ENCODE measurements at regions of chr20 and their contacts with region 1.

Region 1: GRCh38 chr20:33933469-33933909 is 60.2 kb upstream of the RALY start:
- DNase-seq: peak; percentile 69
- ATAC-seq: peak; percentile 97

Region 2: DNA sequence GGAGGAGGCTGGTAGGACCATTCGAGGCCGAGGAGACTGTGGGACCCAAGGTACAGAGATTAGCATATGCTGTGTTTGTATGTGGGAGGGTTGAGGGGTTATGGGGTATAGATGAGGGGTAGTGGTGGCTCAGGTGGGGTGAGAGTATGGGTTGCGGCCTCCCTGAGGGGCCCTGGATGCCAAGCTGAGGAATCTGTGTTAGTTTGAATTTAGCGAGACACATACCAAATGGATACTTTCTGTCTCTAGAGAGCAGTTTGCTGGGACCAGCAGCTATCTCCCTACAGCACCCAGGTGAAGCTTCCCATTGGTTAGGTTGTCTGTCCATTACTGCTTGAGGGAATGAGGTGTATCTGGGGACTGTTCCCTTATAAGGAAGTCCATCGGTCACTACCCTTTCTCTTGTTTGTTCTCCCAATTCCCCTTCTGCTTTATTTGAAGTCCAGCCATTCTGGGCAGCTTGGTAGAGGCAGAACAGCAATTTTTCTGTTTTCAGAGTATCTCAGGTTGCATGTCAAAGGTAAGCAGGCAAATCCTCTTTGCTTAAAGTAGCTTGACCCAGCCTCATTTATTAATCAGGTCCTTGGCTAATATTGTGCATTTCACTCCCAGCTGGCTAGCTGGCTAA is 107.1 kb before region 1 on chr20:
- intact Hi-C with region 1: no loop called
- DNase-seq: no peak
- ATAC-seq: no peak

Region 3: DNA sequence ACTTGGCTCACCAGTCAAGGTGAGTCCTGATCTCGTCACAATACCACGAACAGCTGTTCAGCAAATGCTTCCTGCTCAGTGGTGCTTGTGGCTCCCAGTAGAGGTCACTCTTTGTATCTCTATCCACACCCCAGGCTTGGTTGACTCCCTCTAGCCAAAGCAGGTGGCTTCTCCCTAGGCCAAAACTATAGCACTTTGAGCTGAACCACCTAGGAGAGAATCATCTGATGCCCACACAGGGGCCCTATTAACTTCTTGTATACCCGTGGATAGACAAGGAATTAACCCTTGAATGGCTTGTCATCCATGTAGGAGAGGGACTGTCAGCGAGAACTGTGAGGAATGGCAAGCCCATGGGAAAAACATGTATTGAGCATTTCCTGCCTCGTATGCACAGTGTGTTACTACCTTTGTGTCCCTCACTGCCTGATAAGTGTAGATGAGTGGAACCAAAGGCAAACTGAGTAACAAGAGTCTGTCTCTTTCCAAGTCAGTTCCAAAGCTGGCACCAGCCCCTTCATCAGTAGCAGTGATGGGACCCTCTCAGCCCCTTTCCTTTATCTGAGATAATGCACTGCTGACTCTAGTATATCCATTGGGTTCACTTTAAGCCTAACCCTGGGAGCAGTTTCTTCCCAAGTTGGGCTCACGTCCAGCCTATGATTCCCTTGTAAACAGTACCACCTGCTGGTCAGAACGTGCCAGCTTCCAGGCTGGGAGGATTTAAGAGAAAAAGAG is 136.0 kb after region 1 on chr20:
- intact Hi-C with region 1: loop called (anchors 2 kb)
- DNase-seq: peak; percentile 63
- ATAC-seq: peak; percentile 89

Region 4: DNA sequence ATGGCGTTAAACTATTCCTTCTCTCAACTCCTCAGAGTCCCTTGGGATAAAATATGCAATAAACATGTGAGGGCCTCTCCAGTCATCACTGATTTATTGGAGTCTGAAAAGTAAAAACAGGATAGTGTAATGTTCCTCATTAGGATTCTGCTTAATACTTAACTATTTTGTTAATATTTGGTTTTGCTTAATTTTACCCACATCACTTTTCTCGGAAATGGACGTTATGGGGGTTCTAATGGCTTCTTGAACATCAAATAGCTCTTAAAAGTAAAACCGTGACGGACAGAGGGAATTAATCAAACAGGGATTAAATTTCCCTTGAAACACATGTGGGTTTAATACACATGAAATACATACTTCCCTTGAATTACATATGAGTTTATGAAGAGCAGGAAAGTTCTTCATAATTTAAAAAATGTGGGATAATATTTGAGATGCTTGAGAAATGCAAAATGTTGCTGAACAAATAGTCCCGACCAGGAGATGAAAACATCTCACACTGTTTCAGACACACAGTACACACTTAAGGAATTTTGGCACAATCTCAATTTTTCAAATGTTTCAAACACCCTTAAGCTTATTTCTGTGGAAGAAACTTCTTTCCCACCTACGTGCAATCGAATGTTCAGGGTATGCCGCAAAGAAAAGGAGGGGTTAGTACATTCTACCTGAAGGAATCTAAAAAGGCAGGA is 217.0 kb after region 1 on chr20:
- intact Hi-C with region 1: no loop called
- DNase-seq: no peak
- ATAC-seq: no peak

Measured in left ventricle myocardium superior (tissue), 1 donor.